Sciatic nerve (tissue), 2 donors: ENCODE measurements at regions of chr3 and their contacts with region 1.

Region 1: GRCh38 chr3:141015481-141015880 is 35.7 kb upstream of the SPSB4 start:
- DNase-seq: no peak
- ATAC-seq: no peak

Region 2: DNA sequence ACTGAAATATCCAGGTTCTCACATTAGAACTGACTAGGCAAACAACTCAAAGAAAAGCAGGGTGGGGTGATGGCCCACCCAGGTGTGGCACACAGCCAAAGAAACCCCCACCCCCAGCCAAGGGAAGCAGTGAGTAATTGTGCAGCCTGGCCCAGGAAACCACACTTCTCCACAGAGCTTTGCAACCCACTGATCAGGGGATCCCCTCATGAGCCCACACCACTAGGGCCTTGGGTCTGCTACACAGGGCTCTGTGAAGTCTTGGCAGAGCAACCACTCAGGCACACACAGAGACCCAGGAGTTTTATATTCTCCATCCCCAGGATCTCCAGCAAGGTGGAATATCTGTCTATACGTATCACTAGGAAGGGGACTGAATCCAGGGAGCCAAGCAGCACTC is 359.8 kb before region 1 on chr3:
- intact Hi-C with region 1: no loop called
- DNase-seq: no peak
- ATAC-seq: no peak

Region 3: DNA sequence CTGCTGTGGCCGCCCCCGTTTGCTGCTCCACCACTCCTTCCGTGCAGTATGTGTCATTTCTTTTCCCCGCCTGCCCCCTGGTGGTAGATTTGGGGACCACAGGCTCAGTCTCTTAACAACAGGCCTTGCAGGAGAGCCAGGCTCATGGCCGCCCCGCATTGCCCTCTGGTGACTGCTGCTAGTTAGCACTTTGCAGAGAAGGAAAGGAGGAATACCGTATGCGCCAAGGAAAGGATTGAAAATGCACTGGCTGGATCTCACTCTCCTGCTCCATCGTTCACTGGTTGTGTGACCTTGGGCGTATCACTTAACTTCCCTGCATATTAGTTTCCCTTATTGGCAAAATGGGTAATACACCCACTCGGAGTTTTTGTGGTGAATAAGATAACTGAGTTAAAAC is 176.9 kb after region 1 on chr3:
- intact Hi-C with region 1: loop called (anchors 5 kb)
- DNase-seq: peak; percentile 99
- ATAC-seq: peak; percentile 99